GM12878 (cell line): ENCODE measurements at regions of chr15 and their contacts with region 1.

Region 1: GRCh38 chr15:44918136-44918535 is 38.4 kb upstream of the TERB2 start:
- DNase-seq: no peak
- ATAC-seq: no peak
- H3K4me3 ChIP-seq: no peak overlapping the region
- H3K27ac ChIP-seq: no peak overlapping the region
- H3K4me1 ChIP-seq: no peaks in the 10 kb centered on the region
- H3K27me3 ChIP-seq: no peaks in the 10 kb centered on the region
- CTCF ChIP-seq: no peak
- EP300 ChIP-seq: no peak
- POLR2A ChIP-seq: no peak
- RAD21 ChIP-seq: no peak

Region 2: GRCh38 chr15:44861439-44861910 is 56.7 kb before region 1 on chr15:
- CTCF ChIA-PET with region 1: interaction called, 4 read pairs
- POLR2A ChIA-PET with region 1: no interaction called
- RAD21 ChIA-PET with region 1: no interaction called
- SMC1A ChIA-PET with region 1: no interaction called
- in situ Hi-C with region 1: loop called (anchors 5 kb)
- intact Hi-C with region 1: no loop called
- DNase-seq: no peak
- ATAC-seq: no peak
- H3K4me3 ChIP-seq: no peak overlapping the region
- H3K27ac ChIP-seq: no peak overlapping the region
- H3K4me1 ChIP-seq: no peaks in the 10 kb centered on the region
- H3K27me3 ChIP-seq: no peaks in the 10 kb centered on the region
- CTCF ChIP-seq: no peak
- EP300 ChIP-seq: no peak
- POLR2A ChIP-seq: no peak
- RAD21 ChIP-seq: no peak

Region 3: DNA sequence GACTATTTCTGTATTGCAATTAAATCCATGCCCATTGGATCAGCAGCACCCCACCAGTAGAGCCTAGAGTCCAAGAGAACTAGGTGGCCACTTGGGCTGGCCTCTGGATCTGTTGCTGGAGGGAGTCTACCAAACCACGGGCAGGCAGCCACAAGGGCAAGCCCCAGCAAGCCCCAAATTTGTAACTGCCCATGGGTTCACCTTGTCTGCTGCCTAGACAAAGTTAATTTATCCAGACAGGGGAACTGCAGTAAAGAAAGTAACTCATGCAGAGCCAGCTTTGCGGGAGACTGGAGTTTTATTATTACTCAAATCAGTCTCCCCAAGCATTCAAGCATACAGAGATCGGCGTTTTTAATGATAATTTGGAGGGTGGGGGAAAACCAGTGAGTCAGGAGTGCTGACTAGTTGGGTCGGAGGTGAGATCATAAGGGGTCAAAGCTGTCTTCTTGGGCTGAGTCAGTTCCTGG is 35.6 kb before region 1 on chr15:
- CTCF ChIA-PET with region 1: no interaction called
- POLR2A ChIA-PET with region 1: interaction called, 3 read pairs
- RAD21 ChIA-PET with region 1: interaction called, 4 read pairs
- SMC1A ChIA-PET with region 1: interaction called, 7 read pairs
- in situ Hi-C with region 1: no loop called
- intact Hi-C with region 1: loop called (anchors 5 kb)
- DNase-seq: peak; percentile 92
- ATAC-seq: peak; percentile 84
- H3K4me3 ChIP-seq: peak overlapping the region; percentile 76
- H3K27ac ChIP-seq: peak overlapping the region; percentile 82
- H3K4me1 ChIP-seq: peaks cover 16% of the 10 kb centered on the region
- H3K27me3 ChIP-seq: no peaks in the 10 kb centered on the region
- CTCF ChIP-seq: no peak
- EP300 ChIP-seq: peak; percentile 85 to 86; a peak in 3 of 4 replicates
- POLR2A ChIP-seq: peak; percentile 65
- RAD21 ChIP-seq: no peak

Region 4: GRCh38 chr15:45136378-45136764 is 218.2 kb after region 1 on chr15:
- CTCF ChIA-PET with region 1: no interaction called
- POLR2A ChIA-PET with region 1: no interaction called
- RAD21 ChIA-PET with region 1: no interaction called
- SMC1A ChIA-PET with region 1: no interaction called
- in situ Hi-C with region 1: no loop called
- intact Hi-C with region 1: no loop called
- DNase-seq: no peak
- ATAC-seq: peak; percentile 22; the same call in 1 of the 3 replicates
- H3K4me3 ChIP-seq: no peak overlapping the region
- H3K27ac ChIP-seq: no peak overlapping the region
- H3K4me1 ChIP-seq: no peaks in the 10 kb centered on the region
- H3K27me3 ChIP-seq: peaks cover 3 to 6% of the 10 kb centered on the region in 2 experiments; a peak in 2 of 4 replicates
- CTCF ChIP-seq: peak; percentile 5 to 47 (median 25); a peak in 3 of 6 replicates
- EP300 ChIP-seq: no peak
- POLR2A ChIP-seq: no peak
- RAD21 ChIP-seq: no peak

Region 5: GRCh38 chr15:45198337-45199135 is 280.4 kb after region 1 on chr15:
- CTCF ChIA-PET with region 1: no interaction called
- POLR2A ChIA-PET with region 1: no interaction called
- RAD21 ChIA-PET with region 1: no interaction called
- SMC1A ChIA-PET with region 1: no interaction called
- in situ Hi-C with region 1: no loop called
- intact Hi-C with region 1: no loop called
- DNase-seq: peak; percentile 98
- ATAC-seq: peak; percentile 63
- H3K4me3 ChIP-seq: peak overlapping the region; percentile 86
- H3K27ac ChIP-seq: peak overlapping the region; percentile 95
- H3K4me1 ChIP-seq: no peaks in the 10 kb centered on the region; the same call in none of the 2 replicates
- H3K27me3 ChIP-seq: no peaks in the 10 kb centered on the region
- CTCF ChIP-seq: peak; percentile 71 to 81 (median 80)
- EP300 ChIP-seq: peak in 1 of 2 experiments; percentile 90; a peak in 1 of 4 replicates
- POLR2A ChIP-seq: peak; percentile 96
- RAD21 ChIP-seq: no peak